CD14-positive monocyte (primary cell): ENCODE measurements at regions of chr18 and their contacts with region 1.

Region 1: GRCh38 chr18:21727702-21728101 is 12.9 kb upstream of the MIB1 start:
- DNase-seq: no peak
- H3K4me3 ChIP-seq: no peak overlapping the region
- H3K4me3 Mint-ChIP-seq: no peak overlapping the region
- H3K27ac ChIP-seq: no peak overlapping the region
- H3K27ac Mint-ChIP-seq: no peak overlapping the region
- H3K4me1 ChIP-seq: no peaks in the 10 kb centered on the region
- H3K4me1 Mint-ChIP-seq: peaks cover 3% of the 10 kb centered on the region
- H3K27me3 ChIP-seq: no peaks in the 10 kb centered on the region
- H3K27me3 Mint-ChIP-seq: peaks cover 0 to 2% (median 0%) of the 10 kb centered on the region in 3 donors
- CTCF ChIP-seq: no peak

Region 2: GRCh38 chr18:21656402-21656801 is 71.3 kb before region 1 on chr18:
- intact Hi-C with region 1: loop called in 1 of 2 experiments (anchors 10 kb)
- DNase-seq: no peak
- H3K4me3 ChIP-seq: no peak overlapping the region
- H3K4me3 Mint-ChIP-seq: no peak overlapping the region
- H3K27ac ChIP-seq: no peak overlapping the region
- H3K27ac Mint-ChIP-seq: peak overlapping the region in 1 of 7 donors; percentile 61
- H3K4me1 ChIP-seq: no peaks in the 10 kb centered on the region
- H3K4me1 Mint-ChIP-seq: no peaks in the 10 kb centered on the region
- H3K27me3 ChIP-seq: no peaks in the 10 kb centered on the region
- H3K27me3 Mint-ChIP-seq: no peaks in the 10 kb centered on the region
- CTCF ChIP-seq: no peak